A549 (cell line): ENCODE measurements at regions of chr5 and their contacts with region 1.

Region 1: DNA sequence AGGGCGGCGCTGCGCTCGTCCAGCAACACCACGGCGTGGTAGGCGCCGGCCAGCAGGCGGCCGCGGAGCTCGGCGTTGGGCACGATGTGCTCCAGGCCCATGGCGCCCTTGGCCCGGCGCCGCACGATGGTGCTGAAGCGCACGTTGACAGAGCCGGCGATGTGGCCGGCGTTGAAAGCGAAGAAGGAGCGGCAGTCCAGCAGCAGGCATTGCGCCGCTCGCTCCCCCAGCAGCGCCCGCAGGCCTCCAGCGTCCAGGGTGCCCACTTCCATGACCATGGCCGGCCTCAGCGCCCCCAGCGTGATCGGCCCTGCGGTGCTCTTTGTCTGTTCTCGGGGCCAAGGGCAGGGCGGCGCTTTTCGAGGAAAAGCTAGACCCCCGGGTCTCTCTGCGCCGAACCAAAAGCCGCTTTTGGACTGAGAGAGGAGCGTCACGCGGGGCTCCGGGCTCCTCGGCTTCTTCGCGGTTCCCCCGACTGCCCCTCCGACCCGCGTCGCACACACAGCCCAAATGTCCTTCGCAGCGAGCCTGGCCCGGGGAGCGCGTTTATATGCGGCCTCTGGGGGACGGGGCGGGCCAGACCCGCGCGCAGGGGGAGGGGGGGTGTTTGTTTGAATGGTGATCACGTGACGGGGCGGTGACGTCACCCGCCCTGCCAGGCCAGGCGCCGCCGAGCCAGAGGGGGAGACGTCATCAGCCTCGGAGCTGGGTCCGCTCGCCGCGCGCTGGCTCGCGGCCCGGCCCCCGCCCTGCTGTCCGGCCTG is at the start of gene DUSP1:
- DNase-seq: peak; percentile 92 to 99
- ATAC-seq: peak; percentile 32 to 50
- H3K4me3 ChIP-seq: peak within 1 kb of the TSS; percentile 75
- H3K27ac ChIP-seq: peak within 1 kb of the TSS; percentile 97 to 100
- H3K4me1 ChIP-seq: peaks cover 42% of the 10 kb centered on the region
- CTCF ChIP-seq: peak; percentile 27; the same call in 1 of the 3 replicates
- EP300 ChIP-seq: peak; percentile 89 to 96
- POLR2A ChIP-seq: peak; percentile 99
- RAD21 ChIP-seq: peak; percentile 8 to 52
- polyA plus RNA-seq, gene DUSP1: 525 and 594 TPM in 2 replicates

Region 2: GRCh38 chr5:172688349-172689217 is 82.3 kb before region 1 on chr5:
- CTCF ChIA-PET with region 1: no interaction called
- POLR2A ChIA-PET with region 1: no interaction called
- DNase-seq: no peak
- ATAC-seq: peak in 1 of 2 experiments; percentile 37; a peak in 1 of 6 replicates
- H3K4me3 ChIP-seq: no peak overlapping the region
- H3K27ac ChIP-seq: no peak overlapping the region
- H3K4me1 ChIP-seq: no peaks in the 10 kb centered on the region
- CTCF ChIP-seq: no peak
- EP300 ChIP-seq: no peak
- POLR2A ChIP-seq: no peak
- RAD21 ChIP-seq: no peak

Region 3: GRCh38 chr5:172740428-172741201 is 30.2 kb before region 1 on chr5:
- CTCF ChIA-PET with region 1: interaction called, 4 read pairs
- POLR2A ChIA-PET with region 1: interaction called, 17 read pairs
- DNase-seq: peak; percentile 65 to 80
- ATAC-seq: peak; percentile 95 to 96
- H3K4me3 ChIP-seq: no peak overlapping the region
- H3K27ac ChIP-seq: peak overlapping the region; percentile 73 to 86
- H3K4me1 ChIP-seq: peaks cover 20% of the 10 kb centered on the region
- CTCF ChIP-seq: no peak
- EP300 ChIP-seq: no peak
- POLR2A ChIP-seq: no peak
- RAD21 ChIP-seq: no peak

Region 4: GRCh38 chr5:172800088-172800551 is 29.3 kb after region 1 on chr5:
- CTCF ChIA-PET with region 1: interaction called, 21 read pairs
- POLR2A ChIA-PET with region 1: interaction called, 24 read pairs
- DNase-seq: peak in 1 of 2 experiments; percentile 72
- ATAC-seq: peak; percentile 64 to 71
- H3K4me3 ChIP-seq: no peak overlapping the region
- H3K27ac ChIP-seq: peak overlapping the region; percentile 72 to 82; a peak in 5 of 6 replicates
- H3K4me1 ChIP-seq: peaks cover 58% of the 10 kb centered on the region
- CTCF ChIP-seq: no peak
- EP300 ChIP-seq: no peak
- POLR2A ChIP-seq: no peak
- RAD21 ChIP-seq: no peak

Region 5: DNA sequence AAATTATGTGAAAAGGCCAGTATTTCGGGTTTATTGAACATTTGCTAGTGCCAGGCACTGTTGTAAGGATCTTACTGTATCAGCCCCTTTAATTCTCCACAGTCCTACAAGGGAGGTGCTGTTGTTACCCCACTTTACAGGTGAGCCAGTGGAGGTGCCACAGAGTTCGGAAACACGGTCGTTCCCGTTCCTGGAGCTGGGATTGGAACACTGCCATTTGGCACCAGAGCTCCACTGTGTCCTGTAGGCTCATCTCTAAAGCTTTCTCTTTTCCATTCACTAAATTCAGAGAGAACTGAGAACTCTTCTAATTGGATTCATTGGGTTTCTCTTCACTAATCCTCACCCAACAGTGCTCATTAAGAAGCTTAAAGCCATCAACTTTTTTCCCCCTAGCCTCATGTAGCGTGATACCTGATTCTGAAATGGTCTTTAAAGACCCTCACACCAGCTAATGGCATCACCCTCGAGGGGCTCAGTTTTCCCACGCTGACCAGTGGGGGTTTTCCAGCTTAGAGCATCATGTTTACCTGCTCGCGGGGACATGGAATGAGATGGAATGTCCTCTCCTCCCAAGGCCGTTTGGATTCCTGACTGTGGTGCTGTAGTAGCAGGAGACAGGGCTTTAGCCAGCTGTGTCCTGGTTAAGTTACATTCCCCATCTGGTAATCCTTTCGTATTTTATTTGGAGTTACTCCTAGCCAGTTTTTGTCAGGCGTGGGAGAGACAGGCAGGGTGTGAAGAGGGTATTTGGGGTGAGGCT is 69.0 kb after region 1 on chr5:
- CTCF ChIA-PET with region 1: interaction called, 22 read pairs
- POLR2A ChIA-PET with region 1: interaction called, 13 read pairs
- DNase-seq: no peak
- ATAC-seq: no peak
- H3K4me3 ChIP-seq: no peak overlapping the region
- H3K27ac ChIP-seq: peak overlapping the region; percentile 20 to 69
- H3K4me1 ChIP-seq: peaks cover 72% of the 10 kb centered on the region
- CTCF ChIP-seq: no peak
- EP300 ChIP-seq: no peak
- POLR2A ChIP-seq: no peak
- RAD21 ChIP-seq: no peak

Region 6: GRCh38 chr5:172897481-172898217 is 126.8 kb after region 1 on chr5:
- CTCF ChIA-PET with region 1: interaction called, 131 read pairs
- POLR2A ChIA-PET with region 1: interaction called, 87 read pairs
- DNase-seq: peak; percentile 90 to 96
- ATAC-seq: peak; percentile 55 to 73
- H3K4me3 ChIP-seq: 0 out of 3 replicates have a peak overlapping the region, but pooled peaks have one; percentile 10
- H3K27ac ChIP-seq: peak overlapping the region; percentile 99 to 100
- H3K4me1 ChIP-seq: peaks cover 87% of the 10 kb centered on the region
- CTCF ChIP-seq: no peak
- EP300 ChIP-seq: peak; percentile 99 to 100
- POLR2A ChIP-seq: no peak
- RAD21 ChIP-seq: peak; percentile 8 to 53; a peak in 2 of 5 replicates

Region 7: GRCh38 chr5:172920447-172920849 is 149.6 kb after region 1 on chr5:
- CTCF ChIA-PET with region 1: interaction called, 3 read pairs
- POLR2A ChIA-PET with region 1: interaction called, 23 read pairs
- DNase-seq: peak; percentile 95 to 97
- ATAC-seq: peak; percentile 84 to 87
- H3K4me3 ChIP-seq: no peak overlapping the region
- H3K27ac ChIP-seq: peak overlapping the region; percentile 98 to 100
- H3K4me1 ChIP-seq: peaks cover 68% of the 10 kb centered on the region
- CTCF ChIP-seq: no peak
- EP300 ChIP-seq: peak; percentile 100
- POLR2A ChIP-seq: no peak
- RAD21 ChIP-seq: peak in 1 of 2 experiments; percentile 67; a peak in 2 of 5 replicates

Region 8: DNA sequence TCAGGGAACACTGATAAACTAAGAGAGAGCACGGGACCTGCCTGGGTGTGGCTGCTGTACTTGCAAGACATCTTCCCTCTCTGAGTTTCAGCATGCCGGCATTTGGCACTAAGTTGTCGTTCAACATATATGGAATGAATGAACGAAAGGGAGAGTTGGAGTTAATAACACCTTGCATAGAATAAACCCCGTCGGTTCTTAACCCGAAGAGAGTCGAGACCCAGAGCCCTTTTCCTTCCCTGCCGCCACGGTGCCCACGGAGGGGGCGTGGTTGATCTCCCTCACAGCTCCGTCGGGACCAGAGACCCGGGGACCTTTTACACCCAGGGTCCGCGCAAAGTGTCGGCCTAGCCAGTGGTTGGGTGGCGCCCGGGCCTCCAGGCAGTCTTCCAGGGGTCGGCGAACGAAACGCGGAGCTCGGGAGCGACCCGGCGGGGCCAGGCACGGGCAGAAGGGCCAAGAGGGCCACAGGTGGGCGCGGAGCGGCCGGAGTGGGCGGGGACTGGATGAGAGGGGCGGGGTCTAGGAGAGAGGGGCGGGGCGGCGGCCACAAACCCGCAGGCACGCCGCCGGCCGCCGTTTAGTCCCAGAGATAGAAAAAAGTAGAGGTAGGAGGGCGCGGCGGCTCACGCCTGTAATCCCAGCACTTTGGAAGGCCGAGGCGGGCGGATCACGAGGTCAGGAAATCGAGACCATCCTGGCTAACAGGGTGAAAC is 187.6 kb after region 1 on chr5:
- CTCF ChIA-PET with region 1: interaction called, 4 read pairs
- POLR2A ChIA-PET with region 1: interaction called, 12 read pairs
- DNase-seq: peak; percentile 66 to 84
- ATAC-seq: peak; percentile 77 to 78
- H3K4me3 ChIP-seq: peak overlapping the region; percentile 65
- H3K27ac ChIP-seq: peak overlapping the region; percentile 94 to 95
- H3K4me1 ChIP-seq: peaks cover 57% of the 10 kb centered on the region
- CTCF ChIP-seq: no peak
- EP300 ChIP-seq: no peak
- POLR2A ChIP-seq: no peak
- RAD21 ChIP-seq: no peak; a peak in 1 of 5 replicates